Spleen (tissue), 13 donors: ENCODE measurements at regions of chr3 and their contacts with region 1.

Region 1: GRCh38 chr3:53709860-53710674 is 136.2 kb downstream of the CHDH start:
- DNase-seq: peak; percentile 86
- H3K4me3 ChIP-seq: no peak overlapping the region
- H3K27ac ChIP-seq: peak overlapping the region in 2 of 8 donors; percentile 34 to 39
- H3K4me1 ChIP-seq: peaks cover 0 to 84% (median 19%) of the 10 kb centered on the region in 6 donors
- H3K27me3 ChIP-seq: no peaks in the 10 kb centered on the region
- CTCF ChIP-seq: peak; percentile 46 to 85 (median 76)
- POLR2A ChIP-seq: no peak

Region 2: GRCh38 chr3:53303957-53304356 is 406.1 kb before region 1 on chr3:
- intact Hi-C with region 1: loop called (anchors 5 kb)
- DNase-seq: no peak
- H3K4me3 ChIP-seq: no peak overlapping the region
- H3K27ac ChIP-seq: no peak overlapping the region
- H3K4me1 ChIP-seq: peaks cover 0 to 9% (median 0%) of the 10 kb centered on the region in 6 donors
- H3K27me3 ChIP-seq: no peaks in the 10 kb centered on the region
- CTCF ChIP-seq: no peak
- POLR2A ChIP-seq: no peak

Region 3: DNA sequence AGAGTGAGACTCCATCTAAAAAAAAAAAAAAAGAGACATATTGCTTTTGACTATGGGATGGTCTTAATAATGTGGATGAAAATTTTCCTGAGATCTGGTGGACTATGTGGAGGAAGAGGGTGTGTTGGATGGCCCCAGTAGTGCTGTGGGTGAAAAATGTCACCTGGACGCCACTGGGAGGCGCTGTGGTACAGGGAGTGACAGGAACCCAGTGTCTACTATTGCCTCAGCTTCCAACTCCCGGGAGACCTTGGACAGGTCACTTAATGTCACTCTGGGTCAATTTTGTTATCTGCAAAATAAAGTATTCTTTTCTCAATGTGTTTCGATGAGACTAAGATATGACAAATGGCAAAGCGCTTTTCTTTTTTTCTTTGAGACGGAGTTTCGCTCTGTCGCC is 335.0 kb before region 1 on chr3:
- intact Hi-C with region 1: loop called (anchors 5 kb)
- DNase-seq: peak; percentile 86
- H3K4me3 ChIP-seq: no peak overlapping the region
- H3K27ac ChIP-seq: no peak overlapping the region
- H3K4me1 ChIP-seq: no peaks in the 10 kb centered on the region
- H3K27me3 ChIP-seq: peaks cover 0 to 27% (median 0%) of the 10 kb centered on the region in 7 donors
- CTCF ChIP-seq: peak in 10 of 11 experiments; percentile 46 to 80 (median 71)
- POLR2A ChIP-seq: no peak

Region 4: GRCh38 chr3:54008104-54008503 is 298.0 kb after region 1 on chr3:
- intact Hi-C with region 1: no loop called
- DNase-seq: no peak
- H3K4me3 ChIP-seq: no peak overlapping the region
- H3K27ac ChIP-seq: no peak overlapping the region
- H3K4me1 ChIP-seq: no peaks in the 10 kb centered on the region
- H3K27me3 ChIP-seq: peaks cover 0 to 5% (median 0%) of the 10 kb centered on the region in 7 donors
- CTCF ChIP-seq: no peak
- POLR2A ChIP-seq: no peak